ENCODE measurements at regions of chrX and their contacts with region 1.

Region 1: DNA sequence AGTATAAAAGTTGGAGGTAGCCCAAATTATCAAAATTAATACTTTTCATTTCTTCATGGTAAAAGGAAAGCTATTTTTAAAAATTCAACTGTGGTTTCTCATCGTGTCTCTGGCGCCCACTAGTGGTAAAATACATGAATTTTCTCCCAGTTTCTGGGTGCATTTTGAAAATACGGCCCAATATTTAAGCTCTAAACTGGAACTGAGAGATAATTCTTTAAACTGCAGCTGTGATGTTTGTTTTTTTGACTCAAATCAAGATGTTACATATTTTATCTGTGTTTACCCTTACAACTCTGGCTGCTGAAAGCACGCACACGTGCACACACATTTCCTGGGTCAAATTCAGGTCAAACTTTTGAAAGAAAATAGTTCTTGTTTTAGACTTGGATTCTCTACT is 123.9 kb upstream of the ACSL4 start:
- DNase-seq: no peak
- H3K4me3 ChIP-seq: no peak overlapping the region
- H3K27ac ChIP-seq: no peak overlapping the region
- H3K4me1 ChIP-seq: no peaks in the 10 kb centered on the region
- H3K27me3 ChIP-seq: no peaks in the 10 kb centered on the region
- CTCF ChIP-seq: peak; percentile 55 to 86 (median 70)
- EP300 ChIP-seq: no peak
- POLR2A ChIP-seq: no peak

Region 2: GRCh38 chrX:109709129-109709631 is 147.8 kb before region 1 on chrX:
- in situ Hi-C with region 1: loop called (anchors 10 to 25 kb)
- intact Hi-C with region 1: no loop called
- DNase-seq: no peak
- H3K4me3 ChIP-seq: no peak overlapping the region
- H3K27ac ChIP-seq: peak overlapping the region; percentile 23 to 45 (median 39)
- H3K4me1 ChIP-seq: no peaks in the 10 kb centered on the region
- H3K27me3 ChIP-seq: no peaks in the 10 kb centered on the region
- CTCF ChIP-seq: no peak
- EP300 ChIP-seq: no peak
- POLR2A ChIP-seq: no peak

Region 3: DNA sequence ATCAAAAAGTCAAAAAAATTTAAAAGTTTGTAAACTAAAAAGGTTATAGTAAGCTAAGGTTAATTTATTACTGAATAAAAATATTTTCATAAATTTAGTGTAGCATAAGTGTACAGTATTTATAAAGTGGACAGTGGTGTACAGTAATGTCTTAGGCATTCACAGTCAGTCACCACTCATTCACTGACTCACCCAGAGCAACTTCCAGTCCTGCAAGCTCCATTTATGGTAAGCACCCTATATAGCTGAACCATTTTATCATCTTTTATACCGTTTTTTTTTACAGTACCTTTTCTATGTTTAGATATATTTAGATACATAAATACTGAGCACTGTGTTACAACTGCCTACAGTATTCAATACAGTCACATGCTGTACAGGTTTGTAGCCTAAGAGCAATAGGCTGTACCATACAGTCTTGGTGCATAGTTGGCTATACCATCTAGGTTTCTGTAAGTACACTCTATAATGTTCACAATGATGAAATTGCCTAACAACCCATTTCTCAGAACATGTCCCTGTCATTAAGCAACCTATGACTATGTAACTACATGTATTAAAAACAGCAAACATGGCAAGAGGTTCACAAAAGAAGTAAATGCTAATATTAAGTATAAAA is 142.5 kb before region 1 on chrX:
- in situ Hi-C with region 1: loop called (anchors 10 to 25 kb)
- intact Hi-C with region 1: no loop called
- DNase-seq: no peak
- H3K4me3 ChIP-seq: no peak overlapping the region
- H3K27ac ChIP-seq: no peak overlapping the region
- H3K4me1 ChIP-seq: no peaks in the 10 kb centered on the region
- H3K27me3 ChIP-seq: no peaks in the 10 kb centered on the region
- CTCF ChIP-seq: no peak
- EP300 ChIP-seq: no peak
- POLR2A ChIP-seq: no peak